ENCODE measurements at regions of chr13 and their contacts with region 1.

Region 1: GRCh38 chr13:30739761-30740642 is 4.7 kb downstream of the ALOX5AP start:
- DNase-seq: peak; percentile 91
- ATAC-seq: peak; percentile 71
- H3K4me3 Mint-ChIP-seq: peak overlapping the region; percentile 91
- H3K27ac Mint-ChIP-seq: peak overlapping the region; percentile 99
- H3K4me1 Mint-ChIP-seq: peaks cover 80% of the 10 kb centered on the region
- H3K27me3 Mint-ChIP-seq: no peaks in the 10 kb centered on the region

Region 2: DNA sequence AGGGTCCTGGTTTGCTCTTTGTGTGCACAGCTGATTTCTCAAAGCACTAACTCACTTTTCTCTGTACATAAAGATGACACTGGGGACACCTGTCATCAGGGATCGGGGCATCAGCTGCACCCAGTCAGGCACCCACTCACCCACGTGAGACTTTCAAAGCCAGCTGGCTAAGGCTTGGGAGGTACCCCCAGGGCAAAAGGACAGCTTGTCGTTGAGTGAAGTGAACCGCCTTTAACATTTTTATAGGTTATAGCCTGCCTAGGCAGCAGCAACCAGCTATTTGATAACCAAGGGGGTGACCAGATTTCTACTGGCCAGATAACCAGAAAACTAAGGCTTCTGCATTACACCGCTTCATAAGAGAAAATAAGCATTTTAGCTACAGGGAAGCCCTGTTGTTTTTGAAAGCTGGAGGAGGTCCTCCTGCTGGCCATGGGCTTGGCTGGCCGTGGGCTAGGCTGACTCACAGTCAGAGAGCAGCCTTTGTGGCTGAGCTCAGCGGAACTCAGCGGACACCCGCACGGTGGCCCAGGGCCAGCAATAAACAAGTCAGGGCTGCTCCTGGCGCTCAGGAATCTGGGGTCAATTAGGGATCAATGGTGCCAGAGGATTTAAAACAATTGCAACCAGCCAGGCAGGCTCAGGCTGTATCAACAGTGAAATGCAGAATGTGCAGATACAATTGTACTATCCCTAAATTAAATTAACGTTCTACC is 52.4 kb after region 1 on chr13:
- CTCF ChIA-PET with region 1: interaction called, 11 read pairs
- DNase-seq: no peak
- ATAC-seq: no peak
- H3K4me3 Mint-ChIP-seq: no peak overlapping the region
- H3K27ac Mint-ChIP-seq: no peak overlapping the region
- H3K4me1 Mint-ChIP-seq: peaks cover 32% of the 10 kb centered on the region
- H3K27me3 Mint-ChIP-seq: no peaks in the 10 kb centered on the region

Measured in activated CD8-positive, alpha-beta memory T cell treated with anti-CD3 and anti-CD28 coated beads, Interleukin-2, amount 10 ng/mL, durations not matched to agents 7 days and 5 days (primary cell).